Activated T-helper 1 cell treated with anti-CD3 and anti-CD28 coated beads, Interleukin-12 subunit alpha, Interleukin-12 subunit beta, Interleukin-2, Interleukin-4 antibody, amounts not matched to agents 30 ng/mL and 10 ng/mL and 1 ng/mL, durations not matched to agents 14 hours and 24 hours and 36 hours (primary cell): ENCODE measurements at regions of chr1 and their contacts with region 1.

Region 1: GRCh38 chr1:116485071-116485735 is 85.6 kb downstream of the CD58 start:
- DNase-seq: peak; percentile 72
- H3K4me3 Mint-ChIP-seq: no peak overlapping the region
- H3K27ac Mint-ChIP-seq: no peak overlapping the region
- H3K4me1 Mint-ChIP-seq: peaks cover 14% of the 10 kb centered on the region
- H3K27me3 Mint-ChIP-seq: peaks cover 4% of the 10 kb centered on the region

Region 2: DNA sequence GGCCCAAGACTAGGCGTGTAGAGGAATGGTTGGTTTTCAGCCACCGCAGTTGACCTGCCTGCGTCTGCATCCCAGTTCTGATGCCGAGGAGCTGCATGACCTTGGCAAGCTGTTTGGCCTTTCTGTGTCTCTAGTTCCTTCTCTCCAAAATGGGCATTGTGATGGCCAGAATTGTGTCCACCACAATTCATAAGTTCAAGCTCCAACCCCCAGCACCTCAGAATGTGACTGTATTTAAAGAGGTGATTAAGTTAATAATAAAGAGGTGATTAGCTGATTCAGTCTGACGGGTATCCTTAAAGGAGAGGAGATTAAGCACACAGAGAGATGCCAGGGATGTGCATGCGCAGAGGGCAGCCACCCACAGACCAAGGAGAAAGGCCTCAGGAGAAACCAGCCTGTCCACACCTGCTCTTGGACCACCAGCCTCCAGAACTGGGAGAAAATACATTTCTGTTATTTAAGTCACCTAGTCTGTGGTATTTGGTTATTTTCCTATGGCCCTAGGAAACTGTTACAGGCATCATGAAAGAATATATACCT is 345.5 kb before region 1 on chr1:
- intact Hi-C with region 1: loop called (anchors 1 kb)
- DNase-seq: no peak
- H3K4me3 Mint-ChIP-seq: no peak overlapping the region
- H3K27ac Mint-ChIP-seq: no peak overlapping the region
- H3K4me1 Mint-ChIP-seq: peaks cover 12% of the 10 kb centered on the region
- H3K27me3 Mint-ChIP-seq: peaks cover 6% of the 10 kb centered on the region

Region 3: GRCh38 chr1:116232989-116233514 is 252.2 kb before region 1 on chr1:
- intact Hi-C with region 1: loop called (anchors 10 kb)
- DNase-seq: no peak
- H3K4me3 Mint-ChIP-seq: no peak overlapping the region
- H3K27ac Mint-ChIP-seq: no peak overlapping the region
- H3K4me1 Mint-ChIP-seq: peaks cover 11% of the 10 kb centered on the region
- H3K27me3 Mint-ChIP-seq: peaks cover 5% of the 10 kb centered on the region

Region 4: DNA sequence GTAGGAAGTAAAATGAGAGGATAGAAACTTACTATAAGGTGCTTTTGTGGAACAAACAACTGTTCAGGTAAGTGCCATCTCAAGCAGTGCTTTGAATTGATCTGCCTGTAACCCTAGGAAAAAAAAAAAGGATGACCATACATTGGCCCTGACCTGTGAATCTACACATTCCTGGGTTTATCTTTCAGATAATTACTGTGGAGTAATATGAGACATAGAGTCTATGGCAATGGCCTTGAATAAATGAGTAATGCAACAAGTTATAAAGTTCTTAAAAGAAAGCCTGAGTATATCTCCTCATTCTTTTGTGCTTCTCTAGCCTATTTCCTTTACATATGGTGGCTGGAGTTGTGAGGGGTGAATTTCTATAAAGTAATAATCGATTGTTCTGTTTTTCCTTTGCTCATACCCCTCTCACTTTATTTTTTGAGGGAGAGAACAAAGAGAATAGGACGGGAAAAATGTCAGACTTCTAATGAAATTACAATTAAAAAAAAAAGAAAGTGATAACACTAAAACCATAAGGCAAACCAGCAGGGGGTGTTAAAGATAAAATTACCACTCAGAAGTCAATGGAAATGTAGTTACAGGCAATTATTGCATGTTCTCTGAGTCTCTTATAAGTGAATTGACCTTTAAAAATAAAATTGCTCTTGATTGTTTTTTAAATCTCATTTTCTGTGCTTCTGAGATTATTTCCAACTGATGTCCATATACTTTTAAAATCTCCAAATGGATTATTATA is 124.6 kb before region 1 on chr1:
- intact Hi-C with region 1: loop called (anchors 1 kb)
- DNase-seq: no peak
- H3K4me3 Mint-ChIP-seq: no peak overlapping the region
- H3K27ac Mint-ChIP-seq: no peak overlapping the region
- H3K4me1 Mint-ChIP-seq: no peaks in the 10 kb centered on the region
- H3K27me3 Mint-ChIP-seq: peaks cover 8% of the 10 kb centered on the region

Region 5: GRCh38 chr1:116418091-116418830 is 66.9 kb before region 1 on chr1:
- intact Hi-C with region 1: loop called (anchors 5 kb)
- DNase-seq: peak; percentile 84
- H3K4me3 Mint-ChIP-seq: peak overlapping the region; percentile 90
- H3K27ac Mint-ChIP-seq: peak overlapping the region; percentile 83
- H3K4me1 Mint-ChIP-seq: peaks cover 60% of the 10 kb centered on the region
- H3K27me3 Mint-ChIP-seq: peaks cover 6% of the 10 kb centered on the region

Region 6: GRCh38 chr1:116498789-116499628 is 13.8 kb after region 1 on chr1:
- intact Hi-C with region 1: loop called (anchors 2 kb)
- DNase-seq: peak; percentile 37
- H3K4me3 Mint-ChIP-seq: no peak overlapping the region
- H3K27ac Mint-ChIP-seq: peak overlapping the region; percentile 50
- H3K4me1 Mint-ChIP-seq: peaks cover 75% of the 10 kb centered on the region
- H3K27me3 Mint-ChIP-seq: no peaks in the 10 kb centered on the region